ENCODE measurements at regions of chr20 and their contacts with region 1.

Region 1: GRCh38 chr20:52060794-52061714 is 130.5 kb downstream of the ZFP64 start:
- DNase-seq: peak in 1 of 2 experiments; percentile 6
- H3K4me3 ChIP-seq: no peak overlapping the region
- H3K27ac ChIP-seq: no peak overlapping the region
- H3K4me1 ChIP-seq: no peaks in the 10 kb centered on the region
- H3K27me3 ChIP-seq: no peaks in the 10 kb centered on the region
- CTCF ChIP-seq: peak; percentile 51

Region 2: DNA sequence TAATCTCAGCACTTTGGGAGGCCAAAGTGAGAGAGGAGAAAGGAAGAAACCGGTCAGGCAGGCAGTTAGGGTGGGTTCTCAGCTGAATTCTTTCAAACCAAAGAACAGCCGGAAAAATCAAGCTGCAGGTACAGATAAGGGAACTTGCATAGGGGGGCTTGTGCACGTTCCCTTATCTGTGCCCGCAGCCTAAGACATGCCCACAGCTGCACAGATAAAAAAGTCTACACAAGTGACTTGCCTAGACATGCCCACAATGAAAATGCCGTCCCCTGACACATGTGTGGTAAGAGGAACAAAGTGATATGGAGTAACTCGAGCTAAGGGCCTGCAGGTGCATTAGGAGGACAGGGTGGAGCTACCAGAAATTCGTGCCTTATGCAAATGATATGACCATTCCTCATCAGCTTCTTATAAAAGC is 83.0 kb before region 1 on chr20:
- CTCF ChIA-PET with region 1: no interaction called
- POLR2A ChIA-PET with region 1: no interaction called
- intact Hi-C with region 1: loop called (anchors 10 kb)
- DNase-seq: no peak
- H3K4me3 ChIP-seq: no peak overlapping the region
- H3K27ac ChIP-seq: no peak overlapping the region
- H3K4me1 ChIP-seq: no peaks in the 10 kb centered on the region
- H3K27me3 ChIP-seq: no peaks in the 10 kb centered on the region
- CTCF ChIP-seq: no peak

Region 3: GRCh38 chr20:52025938-52026337 is 35.1 kb before region 1 on chr20:
- CTCF ChIA-PET with region 1: no interaction called
- POLR2A ChIA-PET with region 1: no interaction called
- intact Hi-C with region 1: no loop called
- DNase-seq: no peak
- H3K4me3 ChIP-seq: no peak overlapping the region
- H3K27ac ChIP-seq: no peak overlapping the region
- H3K4me1 ChIP-seq: no peaks in the 10 kb centered on the region
- H3K27me3 ChIP-seq: no peaks in the 10 kb centered on the region
- CTCF ChIP-seq: no peak

Region 4: GRCh38 chr20:52103335-52103912 is 42.4 kb after region 1 on chr20:
- CTCF ChIA-PET with region 1: no interaction called
- POLR2A ChIA-PET with region 1: no interaction called
- intact Hi-C with region 1: no loop called
- DNase-seq: peak; percentile 84 to 93
- H3K4me3 ChIP-seq: peak overlapping the region; percentile 81
- H3K27ac ChIP-seq: peak overlapping the region; percentile 71
- H3K4me1 ChIP-seq: peaks cover 19% of the 10 kb centered on the region
- H3K27me3 ChIP-seq: no peaks in the 10 kb centered on the region
- CTCF ChIP-seq: no peak

Measured in PC-9 (cell line).